Heart left ventricle (tissue), 16 donors: ENCODE measurements at regions of chr19 and their contacts with region 1.

Region 1: GRCh38 chr19:4471403-4472173 is 509 bp upstream of the HDGFL2 start:
- DNase-seq: peak; percentile 97 to 99 (median 98)
- ATAC-seq: peak; percentile 94 to 97 (median 97)
- H3K4me3 ChIP-seq: peak overlapping the region; percentile 65 to 98 (median 92)
- H3K27ac ChIP-seq: peak overlapping the region; percentile 26 to 95 (median 82)
- H3K4me1 ChIP-seq: peaks cover 0 to 27% (median 18%) of the 10 kb centered on the region in 12 donors
- H3K27me3 ChIP-seq: no peaks in the 10 kb centered on the region
- CTCF ChIP-seq: no peak
- POLR2A ChIP-seq: peak in 1 of 2 donors; percentile 79

Region 2: DNA sequence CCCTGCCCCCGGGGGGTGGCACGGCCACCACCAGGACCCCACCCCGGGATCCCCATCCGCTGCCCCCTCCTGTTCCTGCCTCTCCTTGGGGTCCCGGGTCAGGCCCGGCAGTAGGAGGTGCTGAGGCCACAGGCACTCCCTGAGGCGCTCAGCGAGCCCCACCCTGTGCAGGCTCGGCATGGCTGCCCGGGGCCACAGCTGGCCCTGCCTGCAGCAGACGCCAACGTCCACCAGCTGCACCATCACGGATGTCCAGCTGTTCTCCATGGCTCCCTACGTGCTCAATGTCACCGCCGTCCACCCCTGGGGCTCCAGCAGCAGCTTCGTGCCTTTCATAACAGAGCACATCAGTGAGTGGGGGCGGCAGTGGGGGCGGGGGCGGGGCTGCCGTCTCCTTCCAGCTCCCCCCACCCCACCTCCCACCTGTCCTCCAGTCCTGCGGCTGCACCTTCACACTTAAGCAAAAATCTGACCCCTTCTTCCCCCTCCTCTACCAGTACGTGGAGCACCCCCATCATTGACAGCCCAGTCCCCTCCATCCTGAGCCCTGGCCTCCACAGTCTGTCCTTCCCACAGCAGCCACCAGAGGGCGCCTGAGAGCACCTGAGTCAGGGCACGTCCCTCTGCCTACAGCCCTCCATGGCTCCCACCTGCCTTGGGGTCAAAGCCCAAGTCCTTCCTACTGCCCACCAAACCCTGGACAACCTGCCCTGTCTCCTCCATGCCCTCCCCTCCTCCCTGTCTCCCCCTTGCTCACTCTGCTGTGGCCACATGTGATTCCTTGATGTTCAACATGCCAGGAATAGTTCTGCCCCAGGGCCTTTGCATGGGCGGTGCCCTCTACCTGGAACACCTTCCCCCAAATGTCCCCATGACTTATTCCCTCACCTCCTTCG is 238.4 kb before region 1 on chr19:
- intact Hi-C with region 1: no loop called
- DNase-seq: peak in 4 of 5 donors; percentile 31 to 76 (median 43)
- ATAC-seq: peak in 2 of 4 donors; percentile 38 to 57
- H3K4me3 ChIP-seq: no peak overlapping the region
- H3K27ac ChIP-seq: no peak overlapping the region
- H3K4me1 ChIP-seq: peaks cover 0 to 11% (median 0%) of the 10 kb centered on the region in 12 donors
- H3K27me3 ChIP-seq: peaks cover 5 to 63% (median 21%) of the 10 kb centered on the region in 9 donors
- CTCF ChIP-seq: peak; percentile 21 to 55 (median 39)
- POLR2A ChIP-seq: no peak

Region 3: DNA sequence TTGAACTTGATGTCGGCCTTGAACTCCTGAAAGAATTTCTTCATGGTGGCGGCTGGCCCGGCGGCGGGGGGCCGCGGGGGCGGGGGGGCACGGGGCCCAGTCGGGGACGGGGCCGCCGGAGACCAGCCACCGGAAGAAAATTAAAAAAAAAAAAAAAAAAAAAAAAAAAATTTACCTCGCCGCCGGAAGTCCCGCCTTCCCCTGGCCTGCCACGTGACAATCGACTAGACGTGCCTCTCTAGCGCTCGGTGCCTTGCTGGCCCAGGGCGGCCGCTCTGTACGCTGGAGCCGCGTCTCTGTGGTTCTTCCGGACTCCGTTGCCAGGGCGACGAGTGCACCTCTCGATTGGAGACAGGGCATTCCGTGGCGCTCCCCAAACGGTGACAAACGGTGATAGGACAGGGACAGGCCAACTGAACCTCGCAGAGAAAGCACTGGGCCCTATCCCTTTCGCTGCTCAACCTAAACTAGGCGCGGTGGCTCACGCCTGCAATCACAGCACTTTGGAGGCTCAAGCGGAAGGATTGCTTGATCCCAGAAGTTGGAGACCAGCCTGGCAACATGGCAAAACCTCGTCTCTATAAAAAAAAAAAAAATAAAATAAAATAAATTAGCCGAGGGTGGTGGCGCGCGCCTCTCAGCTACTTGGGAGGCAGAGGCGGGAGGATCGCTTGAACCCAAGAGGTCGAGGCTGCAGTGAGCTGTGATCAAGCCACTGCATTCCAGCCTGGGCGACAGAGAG is 13.8 kb before region 1 on chr19 and contains the start of gene UBXN6:
- intact Hi-C with region 1: loop called in 1 of 10 experiments (anchors 1 kb)
- DNase-seq: peak; percentile 97 to 100 (median 98)
- ATAC-seq: peak; percentile 85 to 93 (median 90)
- H3K4me3 ChIP-seq: peak within 1 kb of the TSS; percentile 53 to 96 (median 70)
- H3K27ac ChIP-seq: peak within 1 kb of the TSS; percentile 30 to 96 (median 89)
- H3K4me1 ChIP-seq: peaks cover 0 to 33% (median 20%) of the 10 kb centered on the region in 12 donors
- H3K27me3 ChIP-seq: no peaks in the 10 kb centered on the region
- CTCF ChIP-seq: peak in 2 of 12 donors; percentile 9 to 13
- POLR2A ChIP-seq: no peak
- total RNA-seq, gene UBXN6: 75.1 to 128 (median 109) TPM